Sigmoid colon (tissue), 7 donors: ENCODE measurements at regions of chr19 and their contacts with region 1.

Region 1: DNA sequence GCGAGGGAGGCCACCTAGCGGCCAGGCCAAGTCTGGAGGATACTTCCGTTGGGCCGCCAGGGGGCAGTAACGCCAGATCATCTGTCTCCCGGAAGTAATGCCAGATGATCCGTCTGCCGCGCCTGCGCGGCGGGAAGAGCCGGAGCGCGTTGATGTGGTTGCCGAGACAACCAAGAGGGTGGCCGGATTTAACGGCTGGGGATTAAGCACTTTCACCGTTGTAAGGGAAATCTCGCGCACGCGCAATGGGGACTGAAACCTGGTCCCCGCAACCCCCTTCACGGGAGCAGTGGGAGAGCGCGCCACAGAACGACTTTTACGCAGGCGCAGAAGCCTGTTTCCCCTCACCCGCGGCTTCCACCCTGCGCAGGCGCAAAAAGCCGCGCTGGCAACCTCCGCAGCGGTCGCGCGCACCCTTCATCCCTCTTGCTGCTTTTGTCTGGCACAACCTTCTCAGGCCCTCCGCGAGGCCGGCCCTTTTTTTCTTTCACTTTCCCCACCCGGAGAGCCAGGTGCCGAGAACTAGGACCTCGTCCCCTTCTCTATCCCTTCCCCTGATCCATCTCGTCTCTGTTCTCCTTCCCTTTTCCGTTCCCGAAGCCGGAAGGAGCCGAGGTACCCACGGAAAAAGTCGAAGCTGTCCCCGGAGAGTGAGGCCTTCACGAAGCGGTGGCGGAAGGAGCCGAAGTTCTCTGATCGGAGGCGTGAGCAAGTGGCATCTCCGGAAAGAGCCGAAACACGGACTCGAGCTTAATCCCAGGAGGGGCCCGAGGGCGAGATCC is 886 bp upstream of the U2AF2 start:
- DNase-seq: peak; percentile 100
- H3K4me3 ChIP-seq: peak overlapping the region; percentile 86 to 97 (median 94)
- H3K27ac ChIP-seq: peak overlapping the region; percentile 98 to 100 (median 99)
- H3K4me1 ChIP-seq: peaks cover 0 to 56% (median 52%) of the 10 kb centered on the region in 4 donors
- H3K27me3 ChIP-seq: no peaks in the 10 kb centered on the region
- CTCF ChIP-seq: peak; percentile 92 to 100 (median 100)
- EP300 ChIP-seq: peak in 1 of 4 donors; percentile 20
- POLR2A ChIP-seq: peak; percentile 83 to 92

Region 2: GRCh38 chr19:55339048-55339888 is 314.7 kb before region 1 on chr19 and contains the start of gene KMT5C:
- intact Hi-C with region 1: loop called (anchors 2 kb)
- DNase-seq: peak; percentile 100
- H3K4me3 ChIP-seq: peak within 1 kb of the TSS; percentile 55 to 96 (median 78)
- H3K27ac ChIP-seq: peak within 1 kb of the TSS; percentile 92 to 97 (median 94)
- H3K4me1 ChIP-seq: peaks cover 0 to 29% (median 23%) of the 10 kb centered on the region in 4 donors
- H3K27me3 ChIP-seq: peaks cover 0 to 8% (median 0%) of the 10 kb centered on the region in 3 donors
- CTCF ChIP-seq: peak in 3 of 4 experiments; percentile 39 to 63 (median 40)
- EP300 ChIP-seq: no peak
- POLR2A ChIP-seq: peak; percentile 11 to 12
- total RNA-seq, gene KMT5C: 7.5 to 12.7 (median 9.6) TPM

Region 3: GRCh38 chr19:55599468-55600279 is 54.3 kb before region 1 on chr19 and contains the start of gene FIZ1:
- intact Hi-C with region 1: loop called (anchors 1 kb)
- DNase-seq: peak; percentile 100
- H3K4me3 ChIP-seq: peak within 1 kb of the TSS; percentile 69 to 86 (median 83)
- H3K27ac ChIP-seq: peak within 1 kb of the TSS; percentile 93 to 98 (median 98)
- H3K4me1 ChIP-seq: peaks cover 0 to 22% (median 18%) of the 10 kb centered on the region in 4 donors
- H3K27me3 ChIP-seq: no peaks in the 10 kb centered on the region
- CTCF ChIP-seq: no peak
- EP300 ChIP-seq: no peak
- POLR2A ChIP-seq: no peak
- total RNA-seq, gene FIZ1: 3.5 to 9.6 (median 9.1) TPM

Region 4: GRCh38 chr19:55632463-55632834 is 21.5 kb before region 1 on chr19:
- intact Hi-C with region 1: loop called (anchors 1 kb)
- DNase-seq: peak; percentile 96
- H3K4me3 ChIP-seq: no peak overlapping the region
- H3K27ac ChIP-seq: peak overlapping the region; percentile 69 to 98 (median 75)
- H3K4me1 ChIP-seq: peaks cover 0 to 34% (median 32%) of the 10 kb centered on the region in 4 donors
- H3K27me3 ChIP-seq: no peaks in the 10 kb centered on the region
- CTCF ChIP-seq: peak; percentile 85 to 95 (median 92)
- EP300 ChIP-seq: no peak
- POLR2A ChIP-seq: no peak

Region 5: GRCh38 chr19:55674841-55675660 is 21.1 kb after region 1 on chr19 and contains the start of gene EPN1:
- intact Hi-C with region 1: loop called (anchors 2 kb)
- DNase-seq: peak; percentile 99
- H3K4me3 ChIP-seq: peak within 1 kb of the TSS; percentile 51 to 99 (median 94)
- H3K27ac ChIP-seq: peak within 1 kb of the TSS; percentile 86 to 98 (median 90)
- H3K4me1 ChIP-seq: peaks cover 0 to 49% (median 42%) of the 10 kb centered on the region in 4 donors
- H3K27me3 ChIP-seq: no peaks in the 10 kb centered on the region
- CTCF ChIP-seq: no peak
- EP300 ChIP-seq: no peak
- POLR2A ChIP-seq: no peak
- total RNA-seq, gene EPN1: 22.8 to 54.3 (median 34.6) TPM

Region 6: DNA sequence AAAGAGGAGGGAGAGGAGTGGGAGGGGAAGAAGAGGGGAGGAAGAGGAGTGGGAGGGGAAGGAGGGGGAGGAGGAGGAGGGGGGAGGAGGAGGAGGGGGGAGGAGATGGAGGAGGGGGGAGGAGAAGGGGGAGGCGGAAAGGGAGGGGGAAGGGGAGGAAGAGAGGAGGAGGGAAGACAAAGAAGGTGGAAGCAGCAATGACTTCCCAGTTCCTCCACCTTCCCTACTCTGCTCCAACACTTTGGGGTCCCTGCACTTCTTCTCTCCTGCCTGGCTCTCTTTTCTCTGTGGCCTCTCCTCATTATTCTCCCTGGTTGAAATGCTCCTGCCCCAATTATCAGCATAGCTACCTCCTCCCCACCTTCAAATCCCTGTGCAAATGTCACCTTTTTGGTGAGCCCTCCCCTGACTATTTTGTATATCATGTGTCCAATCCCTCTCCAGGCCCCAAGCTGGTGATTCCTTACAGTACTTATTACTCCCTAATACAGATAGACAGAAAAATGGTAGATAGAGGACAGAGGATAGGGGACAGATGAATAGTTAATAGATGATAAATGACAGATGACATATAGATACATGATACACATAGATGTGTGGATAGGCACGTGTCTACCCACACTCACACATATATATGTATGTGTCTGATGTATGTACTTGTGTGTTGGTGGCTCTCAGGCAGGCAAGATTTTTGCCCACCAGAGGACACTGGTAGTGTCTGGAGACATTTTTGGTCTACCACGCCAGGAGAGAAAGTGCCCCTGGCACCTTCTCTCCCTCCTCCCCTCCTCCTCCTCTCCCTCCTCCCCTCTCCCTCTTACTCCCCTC is 59.1 kb after region 1 on chr19:
- intact Hi-C with region 1: no loop called
- DNase-seq: no peak
- H3K4me3 ChIP-seq: no peak overlapping the region
- H3K27ac ChIP-seq: no peak overlapping the region
- H3K4me1 ChIP-seq: no peaks in the 10 kb centered on the region
- H3K27me3 ChIP-seq: peaks cover 0 to 17% (median 0%) of the 10 kb centered on the region in 3 donors
- CTCF ChIP-seq: no peak
- EP300 ChIP-seq: no peak
- POLR2A ChIP-seq: no peak

Region 7: DNA sequence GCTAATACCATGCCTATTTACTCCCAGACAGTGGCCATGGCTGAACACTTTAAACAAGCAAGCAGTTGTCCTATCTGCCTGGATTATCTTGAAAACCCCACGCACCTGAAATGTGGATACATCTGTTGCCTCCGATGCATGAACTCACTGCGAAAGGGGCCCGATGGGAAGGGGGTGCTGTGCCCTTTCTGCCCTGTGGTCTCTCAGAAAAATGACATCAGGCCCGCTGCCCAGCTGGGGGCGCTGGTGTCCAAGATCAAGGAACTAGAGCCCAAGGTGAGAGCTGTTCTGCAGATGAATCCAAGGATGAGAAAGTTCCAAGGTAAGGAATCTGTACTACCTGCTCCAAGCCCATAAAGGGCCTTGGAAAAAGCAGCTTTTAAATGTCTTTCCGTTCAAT is 123.6 kb after region 1 on chr19:
- intact Hi-C with region 1: no loop called
- DNase-seq: no peak
- H3K4me3 ChIP-seq: no peak overlapping the region
- H3K27ac ChIP-seq: no peak overlapping the region
- H3K4me1 ChIP-seq: no peaks in the 10 kb centered on the region
- H3K27me3 ChIP-seq: no peaks in the 10 kb centered on the region
- CTCF ChIP-seq: no peak
- EP300 ChIP-seq: no peak
- POLR2A ChIP-seq: no peak